Activated B cell treated with CpG ODN at 0.5 μM for 24 hours (primary cell): ENCODE measurements at regions of chr6 and their contacts with region 1.

Region 1: DNA sequence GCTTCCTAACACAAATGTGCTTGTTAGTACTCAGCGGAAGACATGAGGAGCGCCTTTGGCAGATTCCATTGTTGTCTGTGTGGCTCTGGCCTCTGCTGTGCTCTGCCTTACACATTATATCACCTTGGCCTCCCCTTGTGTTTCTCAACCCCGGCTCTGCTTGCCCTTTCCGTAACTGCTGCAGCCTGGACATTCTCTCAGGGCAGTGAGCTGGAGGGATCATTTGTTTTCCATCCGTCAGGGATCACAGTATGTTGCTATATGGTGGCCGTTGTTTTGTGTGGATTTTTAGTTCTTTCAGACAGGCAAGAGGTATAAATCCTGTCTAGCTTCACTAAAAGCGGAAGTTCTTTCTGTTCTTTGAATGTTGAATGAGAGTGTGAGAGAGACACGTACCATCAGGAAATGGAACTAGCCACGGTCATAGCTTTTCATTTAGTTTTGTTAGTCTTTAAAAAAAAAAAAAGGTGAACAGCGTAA is 175.1 kb downstream of the JARID2 start:
- DNase-seq: peak; percentile 31
- ATAC-seq: peak; percentile 91
- H3K4me3 Mint-ChIP-seq: peak overlapping the region; percentile 30
- H3K27ac Mint-ChIP-seq: peak overlapping the region; percentile 86
- H3K4me1 Mint-ChIP-seq: peaks cover 55% of the 10 kb centered on the region
- H3K27me3 Mint-ChIP-seq: no peaks in the 10 kb centered on the region
- CTCF ChIP-seq: no peak

Region 2: DNA sequence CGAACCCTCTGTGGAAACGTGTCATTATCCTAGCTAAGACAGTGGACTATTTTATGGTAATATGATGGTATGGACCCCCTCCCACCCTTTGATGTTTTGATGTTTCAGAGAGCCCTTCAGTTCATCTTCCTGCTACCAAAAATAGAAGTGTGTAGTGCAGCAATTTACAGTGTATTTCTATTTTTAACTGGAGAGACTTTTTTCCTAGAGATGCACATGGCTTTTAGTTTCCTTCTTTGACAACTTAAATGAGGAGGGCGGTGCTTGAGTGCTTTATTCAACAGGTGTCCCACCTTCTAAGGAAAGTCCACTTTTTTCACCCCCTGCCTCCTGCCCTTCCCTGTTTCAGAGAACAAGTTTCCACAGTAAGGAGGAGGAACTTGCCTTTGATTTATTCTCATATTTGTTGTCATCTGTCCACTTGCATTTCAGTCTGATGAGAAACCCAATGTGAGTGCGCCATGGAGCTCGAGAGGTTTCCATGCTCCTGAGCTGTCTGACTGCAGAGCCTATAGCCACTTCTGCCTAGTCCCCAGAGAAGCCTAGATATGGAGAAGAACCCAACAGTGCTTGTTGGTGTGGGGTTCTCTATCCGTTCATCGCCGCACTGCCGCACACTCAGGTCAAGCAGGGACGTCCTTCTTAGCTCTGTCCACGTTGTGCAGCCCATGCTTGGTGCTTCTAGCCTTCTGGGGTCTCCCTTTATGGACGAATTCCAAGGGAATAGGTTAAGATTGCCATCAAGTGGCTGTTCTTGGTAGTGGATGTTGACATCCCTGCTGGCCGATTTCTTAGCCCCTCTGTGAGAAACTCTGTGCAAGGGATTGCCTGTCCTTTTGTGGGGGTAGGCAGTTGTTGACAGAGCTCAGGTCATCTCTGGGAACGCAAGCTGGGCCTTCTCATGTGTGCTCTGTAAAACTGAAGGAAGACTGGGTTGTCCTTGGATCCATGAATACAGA is 31.0 kb before region 1 on chr6:
- CTCF ChIA-PET with region 1: no interaction called
- POLR2A ChIA-PET with region 1: no interaction called
- intact Hi-C with region 1: loop called (anchors 5 kb)
- DNase-seq: no peak
- ATAC-seq: peak; percentile 69
- H3K4me3 Mint-ChIP-seq: peak overlapping the region; percentile 42
- H3K27ac Mint-ChIP-seq: peak overlapping the region; percentile 30
- H3K4me1 Mint-ChIP-seq: peaks cover 71% of the 10 kb centered on the region
- H3K27me3 Mint-ChIP-seq: no peaks in the 10 kb centered on the region
- CTCF ChIP-seq: no peak